ENCODE measurements at regions of chr14 and their contacts with region 1.

Region 1: GRCh38 chr14:39102969-39103957 is at the start of gene SEC23A:
- DNase-seq: peak; percentile 93 to 95 (median 94)
- ATAC-seq: peak; percentile 97 to 99 (median 99)
- H3K4me3 ChIP-seq: peak within 1 kb of the TSS; percentile 69 to 99 (median 90)
- H3K27ac ChIP-seq: peak within 1 kb of the TSS; percentile 89 to 99 (median 97)
- H3K4me1 ChIP-seq: peaks cover 2 to 54% (median 34%) of the 10 kb centered on the region in 12 donors
- H3K27me3 ChIP-seq: no peaks in the 10 kb centered on the region
- CTCF ChIP-seq: peak in 3 of 12 donors; percentile 4 to 18 (median 13)
- POLR2A ChIP-seq: peak; percentile 64 to 92
- total RNA-seq, gene SEC23A: 68.1 to 116 (median 89.3) TPM

Region 2: GRCh38 chr14:38900887-38901286 is 202.4 kb before region 1 on chr14:
- intact Hi-C with region 1: no loop called
- DNase-seq: no peak
- ATAC-seq: no peak
- H3K4me3 ChIP-seq: no peak overlapping the region
- H3K27ac ChIP-seq: no peak overlapping the region
- H3K4me1 ChIP-seq: no peaks in the 10 kb centered on the region
- H3K27me3 ChIP-seq: no peaks in the 10 kb centered on the region
- CTCF ChIP-seq: no peak
- POLR2A ChIP-seq: no peak

Region 3: DNA sequence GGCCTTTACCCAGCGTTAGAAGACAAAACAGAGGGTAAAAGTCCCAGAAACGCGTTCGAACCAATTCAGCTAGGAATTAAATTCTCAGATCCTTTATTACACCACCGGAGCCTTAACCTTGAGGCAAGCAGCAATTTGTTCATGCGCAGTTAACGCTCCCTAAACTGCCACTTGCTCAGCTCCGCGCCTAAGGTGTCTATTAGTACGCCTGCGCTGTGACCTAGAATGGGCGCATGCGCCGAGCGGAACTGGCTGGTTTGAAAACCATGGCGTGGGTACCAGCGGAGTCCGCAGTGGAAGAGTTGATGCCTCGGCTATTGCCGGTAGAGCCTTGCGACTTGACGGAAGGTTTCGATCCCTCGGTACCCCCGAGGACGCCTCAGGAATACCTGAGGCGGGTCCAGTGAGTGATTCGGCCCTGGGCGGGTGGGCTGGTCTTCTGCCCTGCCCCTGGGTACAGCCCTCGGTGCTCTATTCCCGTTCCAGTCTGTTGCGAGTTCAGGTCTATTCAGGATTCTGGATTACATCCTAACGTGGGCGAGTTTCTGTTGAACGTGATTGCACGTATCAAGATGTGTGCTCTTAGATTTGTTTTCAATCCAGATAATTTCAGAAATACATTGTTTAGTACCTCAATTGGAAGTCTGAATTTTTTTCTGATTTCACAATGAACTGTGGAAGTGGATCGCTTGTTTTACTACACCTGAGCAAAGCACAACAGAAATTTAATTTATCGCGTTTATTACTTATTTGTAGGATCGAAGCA is 11.0 kb after region 1 on chr14 and contains the start of gene GEMIN2:
- intact Hi-C with region 1: loop called in 2 of 10 experiments (anchors 1 kb)
- DNase-seq: peak; percentile 90 to 95 (median 93)
- ATAC-seq: peak; percentile 99 to 100 (median 100)
- H3K4me3 ChIP-seq: peak within 1 kb of the TSS; percentile 47 to 92 (median 78)
- H3K27ac ChIP-seq: peak within 1 kb of the TSS; percentile 29 to 84 (median 76)
- H3K4me1 ChIP-seq: peaks cover 0 to 13% (median 10%) of the 10 kb centered on the region in 12 donors
- H3K27me3 ChIP-seq: no peaks in the 10 kb centered on the region
- CTCF ChIP-seq: no peak
- POLR2A ChIP-seq: peak in 1 of 2 donors; percentile 52
- total RNA-seq, gene GEMIN2: 6.3 to 17.8 (median 7.4) TPM

Region 4: GRCh38 chr14:39174560-39175444 is 71.5 kb after region 1 on chr14 and contains the start of gene PNN:
- intact Hi-C with region 1: loop called in 4 of 10 experiments (anchors 5 to 10 kb)
- DNase-seq: peak; percentile 97 to 99 (median 97)
- ATAC-seq: peak; percentile 96 to 98 (median 96)
- H3K4me3 ChIP-seq: peak within 1 kb of the TSS; percentile 39 to 97 (median 80)
- H3K27ac ChIP-seq: peak within 1 kb of the TSS; percentile 77 to 95 (median 93)
- H3K4me1 ChIP-seq: peaks cover 0 to 31% (median 23%) of the 10 kb centered on the region in 12 donors
- H3K27me3 ChIP-seq: no peaks in the 10 kb centered on the region
- CTCF ChIP-seq: no peak
- POLR2A ChIP-seq: peak; percentile 46 to 93
- total RNA-seq, gene PNN: 6.9 to 26.7 (median 21.0) TPM

Region 5: DNA sequence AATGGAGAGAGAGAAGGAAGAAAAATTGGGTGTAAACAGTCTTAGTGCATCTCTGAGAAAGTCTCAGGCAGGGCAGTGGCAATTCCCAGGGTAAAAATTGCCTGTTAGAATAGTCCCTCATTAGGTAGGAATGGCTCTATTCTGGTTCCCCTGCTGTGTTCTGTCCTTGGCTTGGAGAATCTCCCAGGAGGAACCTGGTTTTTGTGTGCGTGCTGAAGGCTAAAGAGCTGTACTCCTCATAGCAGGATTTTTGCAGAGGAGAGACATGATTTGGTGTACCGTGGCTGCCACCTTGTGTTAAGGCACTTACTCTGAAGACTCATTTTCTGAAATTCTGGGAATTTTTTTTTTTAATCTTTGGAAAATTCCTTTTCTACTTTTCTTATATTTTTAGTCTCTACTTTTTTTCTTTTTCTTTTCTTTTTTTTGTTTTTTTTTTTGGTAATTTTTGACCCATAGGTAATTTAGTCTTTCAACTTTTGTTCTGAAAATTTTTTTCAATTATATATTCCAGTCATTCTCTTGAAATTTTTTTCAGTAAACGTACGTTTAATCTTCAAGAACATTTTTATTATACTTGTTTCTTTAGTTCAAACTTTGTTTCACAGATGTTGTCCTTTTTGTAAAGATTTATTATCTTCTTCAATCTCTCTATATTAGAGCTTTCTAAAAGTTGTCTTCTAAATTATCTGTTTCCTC is 265.1 kb after region 1 on chr14:
- intact Hi-C with region 1: loop called in 4 of 10 experiments (anchors 5 to 10 kb)
- DNase-seq: peak in 4 of 5 donors; percentile 26 to 50 (median 38)
- ATAC-seq: peak; percentile 70 to 84 (median 80)
- H3K4me3 ChIP-seq: no peak overlapping the region
- H3K27ac ChIP-seq: no peak overlapping the region
- H3K4me1 ChIP-seq: peaks cover 0 to 18% (median 0%) of the 10 kb centered on the region in 12 donors
- H3K27me3 ChIP-seq: no peaks in the 10 kb centered on the region
- CTCF ChIP-seq: peak in 11 of 12 donors; percentile 5 to 67 (median 50)
- POLR2A ChIP-seq: no peak

Region 6: DNA sequence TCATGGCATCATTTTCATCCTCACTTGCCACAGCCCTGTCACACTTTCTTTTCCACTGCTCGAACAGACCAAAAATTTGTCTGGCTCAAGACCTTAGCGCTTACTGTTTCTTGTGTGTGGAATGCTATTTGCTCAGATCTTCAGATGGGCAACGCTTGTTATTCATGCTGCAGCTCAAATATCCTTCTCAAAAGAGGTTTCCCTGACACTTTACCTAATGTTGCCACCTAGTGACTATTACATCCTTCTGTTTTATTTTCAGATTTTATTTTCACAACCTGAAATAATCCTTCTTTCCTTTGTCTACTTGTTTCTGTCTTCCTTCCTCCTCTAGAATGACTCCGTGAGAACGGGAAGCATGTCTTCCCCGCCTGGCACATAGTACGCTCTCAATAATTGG is 323.3 kb after region 1 on chr14:
- intact Hi-C with region 1: loop called in 6 of 10 experiments (anchors 5 to 10 kb)
- DNase-seq: no peak
- ATAC-seq: no peak
- H3K4me3 ChIP-seq: no peak overlapping the region
- H3K27ac ChIP-seq: no peak overlapping the region
- H3K4me1 ChIP-seq: peaks cover 3 to 78% (median 56%) of the 10 kb centered on the region in 12 donors
- H3K27me3 ChIP-seq: no peaks in the 10 kb centered on the region
- CTCF ChIP-seq: peak in 7 of 12 donors; percentile 4 to 37 (median 23)
- POLR2A ChIP-seq: no peak

Region 7: GRCh38 chr14:39432179-39432618 is 328.9 kb after region 1 on chr14 and contains the start of gene FBXO33:
- intact Hi-C with region 1: loop called in 7 of 10 experiments (anchors 2 to 10 kb)
- DNase-seq: peak; percentile 97 to 99 (median 97)
- ATAC-seq: peak; percentile 92 to 96 (median 95)
- H3K4me3 ChIP-seq: peak within 1 kb of the TSS; percentile 71 to 97 (median 92)
- H3K27ac ChIP-seq: peak within 1 kb of the TSS; percentile 92 to 100 (median 99)
- H3K4me1 ChIP-seq: peaks cover 0 to 44% (median 32%) of the 10 kb centered on the region in 12 donors
- H3K27me3 ChIP-seq: no peaks in the 10 kb centered on the region
- CTCF ChIP-seq: no peak
- POLR2A ChIP-seq: peak in 1 of 2 donors; percentile 30
- total RNA-seq, gene FBXO33: 3.8 to 8.4 (median 5.8) TPM

Region 8: DNA sequence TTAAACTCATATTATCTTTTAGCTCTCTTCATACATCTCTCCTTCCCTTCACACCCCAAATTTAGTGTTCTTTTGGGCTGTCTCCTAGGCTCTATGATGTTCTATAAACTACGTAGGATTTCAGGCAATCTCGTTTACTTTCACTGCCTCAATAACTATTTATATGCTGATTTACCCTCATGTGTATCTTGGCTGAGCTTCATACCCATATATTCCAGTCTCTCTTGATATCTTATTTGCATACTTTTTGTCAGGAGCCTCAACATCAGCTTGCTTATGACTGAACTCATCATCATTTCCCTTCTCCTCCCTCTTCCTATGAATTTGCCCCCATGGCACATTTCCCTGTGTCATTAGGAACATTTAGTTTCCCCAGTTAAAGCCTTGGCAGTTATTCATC is 591.1 kb after region 1 on chr14:
- intact Hi-C with region 1: no loop called
- DNase-seq: no peak
- ATAC-seq: no peak
- H3K4me3 ChIP-seq: no peak overlapping the region
- H3K27ac ChIP-seq: no peak overlapping the region
- H3K4me1 ChIP-seq: no peaks in the 10 kb centered on the region
- H3K27me3 ChIP-seq: no peaks in the 10 kb centered on the region
- CTCF ChIP-seq: no peak
- POLR2A ChIP-seq: no peak